ENCODE measurements at regions of chr15 and their contacts with region 1.

Region 1: GRCh38 chr15:67254238-67255175 is at the starts of genes AAGAB and IQCH:
- DNase-seq: peak; percentile 81 to 98 (median 91)
- ATAC-seq: peak; percentile 99
- H3K4me3 ChIP-seq: peak within 1 kb of the TSS; percentile 69
- H3K4me3 Mint-ChIP-seq: peak within 1 kb of the TSS; percentile 87 to 100 (median 96)
- H3K27ac ChIP-seq: peak within 1 kb of the TSS; percentile 84
- H3K27ac Mint-ChIP-seq: peak within 1 kb of the TSS; percentile 86 to 99 (median 95)
- H3K4me1 ChIP-seq: peaks cover 4 to 13% of the 10 kb centered on the region in 2 donors
- H3K4me1 Mint-ChIP-seq: peaks cover 25 to 52% (median 41%) of the 10 kb centered on the region in 7 donors
- H3K27me3 ChIP-seq: no peaks in the 10 kb centered on the region
- H3K27me3 Mint-ChIP-seq: peaks cover 0 to 25% (median 0%) of the 10 kb centered on the region in 5 donors
- total RNA-seq, gene AAGAB: 19.5 to 44.9 (median 22.3) TPM
- total RNA-seq, gene IQCH: 0.22 to 1.9 (median 0.84) TPM

Region 2: DNA sequence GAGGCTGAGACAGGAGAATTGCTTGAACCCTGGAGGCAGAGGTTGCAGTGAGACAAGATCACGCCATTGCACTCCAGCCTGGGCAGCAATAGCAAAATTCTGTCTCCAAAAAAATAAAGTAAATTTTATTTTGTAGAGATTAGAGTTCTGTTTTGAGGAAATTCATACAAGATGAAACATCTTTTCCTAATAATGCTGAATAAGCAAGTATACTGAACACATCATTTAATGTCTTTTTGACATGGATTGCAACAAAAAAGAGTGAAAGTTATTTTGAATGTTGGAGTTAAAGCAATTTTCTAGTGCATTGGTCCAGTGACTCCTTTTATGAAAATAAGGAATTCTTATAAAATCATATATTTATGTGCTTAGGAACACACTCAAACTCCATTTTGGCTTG is 709.3 kb before region 1 on chr15:
- CTCF ChIA-PET with region 1: no interaction called
- POLR2A ChIA-PET with region 1: no interaction called
- intact Hi-C with region 1: no loop called
- DNase-seq: no peak
- ATAC-seq: no peak
- H3K4me3 ChIP-seq: no peak overlapping the region
- H3K4me3 Mint-ChIP-seq: no peak overlapping the region
- H3K27ac ChIP-seq: no peak overlapping the region
- H3K27ac Mint-ChIP-seq: no peak overlapping the region
- H3K4me1 ChIP-seq: no peaks in the 10 kb centered on the region
- H3K4me1 Mint-ChIP-seq: no peaks in the 10 kb centered on the region
- H3K27me3 ChIP-seq: no peaks in the 10 kb centered on the region
- H3K27me3 Mint-ChIP-seq: no peaks in the 10 kb centered on the region

Region 3: DNA sequence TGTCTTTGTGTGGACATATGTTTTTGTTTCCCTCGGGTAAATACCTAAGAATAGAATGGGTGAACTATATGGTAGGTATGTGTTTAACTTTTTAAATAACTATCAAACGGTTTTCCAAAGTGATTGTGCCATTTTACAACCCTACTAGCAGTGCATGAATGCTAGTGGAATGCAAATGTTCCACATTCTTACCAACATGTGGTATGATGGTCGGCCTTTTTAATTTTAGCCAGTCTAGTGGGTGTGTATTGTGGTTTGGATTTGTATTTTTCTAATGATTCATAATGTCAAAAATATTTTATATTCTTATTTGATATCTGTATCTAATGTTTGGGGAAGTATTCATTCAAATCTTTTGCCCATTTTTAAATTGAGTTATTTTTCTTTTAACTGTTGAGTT is 257.3 kb before region 1 on chr15:
- CTCF ChIA-PET with region 1: no interaction called
- POLR2A ChIA-PET with region 1: no interaction called
- intact Hi-C with region 1: no loop called
- DNase-seq: no peak
- ATAC-seq: no peak
- H3K4me3 ChIP-seq: no peak overlapping the region
- H3K4me3 Mint-ChIP-seq: no peak overlapping the region
- H3K27ac ChIP-seq: no peak overlapping the region
- H3K27ac Mint-ChIP-seq: no peak overlapping the region
- H3K4me1 ChIP-seq: no peaks in the 10 kb centered on the region
- H3K4me1 Mint-ChIP-seq: peaks cover 0 to 2% (median 0%) of the 10 kb centered on the region in 7 donors
- H3K27me3 ChIP-seq: no peaks in the 10 kb centered on the region
- H3K27me3 Mint-ChIP-seq: peaks cover 0 to 20% (median 0%) of the 10 kb centered on the region in 5 donors

Region 4: GRCh38 chr15:67080900-67081431 is 173.5 kb before region 1 on chr15:
- CTCF ChIA-PET with region 1: no interaction called
- POLR2A ChIA-PET with region 1: no interaction called
- intact Hi-C with region 1: loop called in 1 of 2 experiments (anchors 5 kb)
- DNase-seq: peak in 1 of 9 donors; percentile 63
- ATAC-seq: peak; percentile 75
- H3K4me3 ChIP-seq: no peak overlapping the region
- H3K4me3 Mint-ChIP-seq: peak overlapping the region; percentile 6 to 98 (median 46)
- H3K27ac ChIP-seq: no peak overlapping the region
- H3K27ac Mint-ChIP-seq: peak overlapping the region; percentile 55 to 95 (median 81)
- H3K4me1 ChIP-seq: peaks cover 69 to 89% of the 10 kb centered on the region in 2 donors
- H3K4me1 Mint-ChIP-seq: peaks cover 56 to 96% (median 94%) of the 10 kb centered on the region in 7 donors
- H3K27me3 ChIP-seq: no peaks in the 10 kb centered on the region
- H3K27me3 Mint-ChIP-seq: no peaks in the 10 kb centered on the region

Region 5: GRCh38 chr15:67134067-67134838 is 120.3 kb before region 1 on chr15:
- CTCF ChIA-PET with region 1: no interaction called
- POLR2A ChIA-PET with region 1: no interaction called
- intact Hi-C with region 1: loop called in 1 of 2 experiments (anchors 5 kb)
- DNase-seq: peak; percentile 29 to 82 (median 78)
- ATAC-seq: peak; percentile 97
- H3K4me3 ChIP-seq: peak overlapping the region; percentile 41
- H3K4me3 Mint-ChIP-seq: peak overlapping the region; percentile 77 to 95 (median 85)
- H3K27ac ChIP-seq: peak overlapping the region; percentile 91
- H3K27ac Mint-ChIP-seq: peak overlapping the region; percentile 96 to 100 (median 98)
- H3K4me1 ChIP-seq: peaks cover 46 to 72% of the 10 kb centered on the region in 2 donors
- H3K4me1 Mint-ChIP-seq: peaks cover 41 to 93% (median 88%) of the 10 kb centered on the region in 7 donors
- H3K27me3 ChIP-seq: no peaks in the 10 kb centered on the region
- H3K27me3 Mint-ChIP-seq: no peaks in the 10 kb centered on the region

Region 6: DNA sequence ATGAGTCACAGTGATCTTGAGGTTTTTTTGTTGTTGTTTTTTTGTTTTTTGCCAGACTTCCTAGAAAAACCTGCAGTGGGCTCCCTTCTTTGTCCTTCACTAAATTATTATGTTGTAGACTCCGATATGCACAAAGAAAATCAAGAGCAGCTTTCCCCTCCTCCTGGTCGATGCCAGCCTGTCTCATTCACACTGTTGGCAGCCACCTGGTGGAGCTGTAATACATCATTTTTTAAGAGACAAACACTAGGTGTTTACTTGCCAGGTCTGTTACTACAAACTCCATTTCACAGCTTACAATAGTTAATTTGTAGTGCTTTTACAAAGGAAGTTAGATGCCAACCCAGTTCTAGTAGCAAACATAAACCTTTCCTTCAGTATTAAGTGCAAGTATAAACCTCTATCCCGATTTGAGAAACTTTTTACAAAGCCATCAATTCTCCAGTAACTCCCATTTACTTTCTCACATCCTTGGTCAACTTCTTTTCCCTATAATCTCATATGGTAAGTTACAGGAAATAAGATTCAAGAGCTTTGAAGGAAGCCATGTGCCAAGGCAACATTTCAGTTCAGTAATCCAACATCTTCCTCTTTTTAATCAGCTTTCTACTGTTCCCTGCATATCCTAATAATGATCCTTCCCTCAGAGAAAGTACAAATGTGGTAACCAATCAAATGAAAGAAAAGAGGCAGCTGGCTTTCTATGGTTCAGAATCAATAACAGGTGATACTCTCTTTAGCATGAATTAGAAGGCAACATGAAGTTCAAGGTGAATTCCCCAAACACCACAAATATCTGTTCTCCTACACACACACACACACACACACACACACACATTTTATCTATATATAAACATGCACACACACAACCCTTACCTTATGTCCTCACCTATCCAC is 14.0 kb before region 1 on chr15:
- CTCF ChIA-PET with region 1: interaction called, 6 read pairs
- POLR2A ChIA-PET with region 1: interaction called, 3 read pairs
- intact Hi-C with region 1: loop called in 1 of 2 experiments (anchors 1 kb)
- DNase-seq: peak in 3 of 9 donors; percentile 9 to 30 (median 12)
- ATAC-seq: peak; percentile 70
- H3K4me3 ChIP-seq: peak overlapping the region; percentile 23
- H3K4me3 Mint-ChIP-seq: peak overlapping the region in 9 of 10 donors; percentile 18 to 71 (median 45)
- H3K27ac ChIP-seq: no peak overlapping the region
- H3K27ac Mint-ChIP-seq: peak overlapping the region in 8 of 9 donors; percentile 46 to 88 (median 70)
- H3K4me1 ChIP-seq: peaks cover 16 to 34% of the 10 kb centered on the region in 2 donors
- H3K4me1 Mint-ChIP-seq: peaks cover 34 to 67% (median 56%) of the 10 kb centered on the region in 7 donors
- H3K27me3 ChIP-seq: no peaks in the 10 kb centered on the region
- H3K27me3 Mint-ChIP-seq: no peaks in the 10 kb centered on the region

Region 7: GRCh38 chr15:67542420-67543347 is 288.2 kb after region 1 on chr15 and contains the start of gene MAP2K5:
- CTCF ChIA-PET with region 1: no interaction called
- POLR2A ChIA-PET with region 1: no interaction called
- intact Hi-C with region 1: loop called in 1 of 2 experiments (anchors 10 kb)
- DNase-seq: peak; percentile 75 to 87 (median 78)
- ATAC-seq: peak; percentile 89
- H3K4me3 ChIP-seq: peak within 1 kb of the TSS; percentile 90
- H3K4me3 Mint-ChIP-seq: peak within 1 kb of the TSS; percentile 92 to 98 (median 98)
- H3K27ac ChIP-seq: peak within 1 kb of the TSS; percentile 78
- H3K27ac Mint-ChIP-seq: peak within 1 kb of the TSS; percentile 97 to 100 (median 99)
- H3K4me1 ChIP-seq: peaks cover 7 to 22% of the 10 kb centered on the region in 2 donors
- H3K4me1 Mint-ChIP-seq: peaks cover 20 to 68% (median 56%) of the 10 kb centered on the region in 7 donors
- H3K27me3 ChIP-seq: no peaks in the 10 kb centered on the region
- H3K27me3 Mint-ChIP-seq: no peaks in the 10 kb centered on the region
- total RNA-seq, gene MAP2K5: 23.4 to 43.4 (median 35.7) TPM